Activated T-helper 1 cell treated with anti-CD3 and anti-CD28 coated beads, Interleukin-12 subunit alpha, Interleukin-12 subunit beta, Interleukin-2, Interleukin-4 antibody, amounts not matched to agents 30 ng/mL and 10 ng/mL and 1 ng/mL, durations not matched to agents 14 hours and 24 hours and 36 hours (primary cell): ENCODE measurements at regions of chr17 and their contacts with region 1.

Region 1: GRCh38 chr17:8138672-8139371 is 13.4 kb downstream of the PER1 start:
- DNase-seq: peak; percentile 95
- H3K4me3 Mint-ChIP-seq: no peak overlapping the region
- H3K27ac Mint-ChIP-seq: no peak overlapping the region
- H3K4me1 Mint-ChIP-seq: no peaks in the 10 kb centered on the region
- H3K27me3 Mint-ChIP-seq: peaks cover 11% of the 10 kb centered on the region

Region 2: GRCh38 chr17:8125157-8125946 is 13.5 kb before region 1 on chr17:
- intact Hi-C with region 1: loop called (anchors 1 kb)
- DNase-seq: peak; percentile 79
- H3K4me3 Mint-ChIP-seq: peak overlapping the region; percentile 91
- H3K27ac Mint-ChIP-seq: peak overlapping the region; percentile 97
- H3K4me1 Mint-ChIP-seq: peaks cover 49% of the 10 kb centered on the region
- H3K27me3 Mint-ChIP-seq: peaks cover 52% of the 10 kb centered on the region

Region 3: GRCh38 chr17:8151123-8151640 is 12.4 kb after region 1 on chr17:
- intact Hi-C with region 1: loop called (anchors 1 kb)
- DNase-seq: peak; percentile 91
- H3K4me3 Mint-ChIP-seq: peak overlapping the region; percentile 95
- H3K27ac Mint-ChIP-seq: peak overlapping the region; percentile 98
- H3K4me1 Mint-ChIP-seq: peaks cover 37% of the 10 kb centered on the region
- H3K27me3 Mint-ChIP-seq: no peaks in the 10 kb centered on the region

Region 4: GRCh38 chr17:8173056-8173870 is 34.4 kb after region 1 on chr17:
- intact Hi-C with region 1: loop called (anchors 1 kb)
- DNase-seq: peak; percentile 76
- H3K4me3 Mint-ChIP-seq: peak overlapping the region; percentile 87
- H3K27ac Mint-ChIP-seq: peak overlapping the region; percentile 99
- H3K4me1 Mint-ChIP-seq: peaks cover 45% of the 10 kb centered on the region
- H3K27me3 Mint-ChIP-seq: peaks cover 2% of the 10 kb centered on the region

Region 5: DNA sequence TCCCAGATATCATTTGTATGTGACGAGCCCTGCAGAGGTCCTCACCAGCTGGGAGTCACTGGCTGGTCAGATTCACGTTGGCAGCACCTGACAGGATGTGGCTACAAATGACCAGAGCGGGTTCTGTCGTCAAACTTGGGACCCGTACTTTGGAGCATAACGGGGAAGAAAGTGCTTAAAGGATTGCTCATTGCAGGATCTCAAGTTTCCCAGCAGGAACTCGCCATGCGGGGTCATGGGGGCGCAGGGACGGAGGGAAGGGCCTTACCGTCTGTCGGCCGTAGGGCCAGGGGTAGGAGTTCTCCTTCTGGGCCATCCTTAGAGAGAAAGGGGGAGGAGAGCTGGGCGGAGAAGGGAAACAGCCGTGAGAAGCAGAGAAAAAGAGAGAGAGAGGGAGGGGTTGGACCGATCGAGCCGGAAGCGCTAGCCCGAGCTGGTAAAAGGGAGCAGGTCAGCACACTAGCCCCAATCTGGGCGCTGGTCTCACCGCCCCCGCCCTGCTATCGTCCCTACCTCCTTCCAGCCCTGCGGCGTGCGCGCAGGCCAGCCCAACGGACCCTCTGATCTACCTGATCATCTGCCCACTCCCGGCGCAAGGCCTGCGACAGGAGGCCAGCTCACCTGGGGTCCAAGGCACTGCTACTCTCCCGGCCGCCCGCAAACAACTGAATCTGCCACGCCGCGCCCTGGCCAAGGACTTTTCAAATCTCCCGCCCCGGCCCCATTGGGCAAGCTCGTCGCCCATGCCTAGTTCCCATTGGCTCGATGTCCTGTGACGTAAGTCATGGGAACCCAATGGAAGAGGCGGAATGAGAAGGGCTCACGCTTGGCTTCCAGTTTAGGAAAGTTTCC is 71.3 kb after region 1 on chr17 and contains the start of gene AURKB:
- intact Hi-C with region 1: no loop called
- DNase-seq: peak; percentile 91
- H3K4me3 Mint-ChIP-seq: peak within 1 kb of the TSS; percentile 96
- H3K27ac Mint-ChIP-seq: peak within 1 kb of the TSS; percentile 94
- H3K4me1 Mint-ChIP-seq: peaks cover 34% of the 10 kb centered on the region
- H3K27me3 Mint-ChIP-seq: no peaks in the 10 kb centered on the region
- total RNA-seq, gene AURKB: 82.2 and 88.7 TPM in 2 replicates